CD4-positive, alpha-beta T cell (primary cell): ENCODE measurements at regions of chr9 and their contacts with region 1.

Region 1: GRCh38 chr9:124852829-124853531 is at the start of gene WDR38:
- DNase-seq: peak; percentile 56 to 94 (median 67)
- ATAC-seq: peak; percentile 85
- H3K4me3 ChIP-seq: peak within 1 kb of the TSS; percentile 40
- H3K4me3 Mint-ChIP-seq: peak within 1 kb of the TSS; percentile 56
- H3K27ac ChIP-seq: peak within 1 kb of the TSS in 1 of 2 donors; percentile 21
- H3K27ac Mint-ChIP-seq: no peak within 1 kb of the TSS
- H3K4me1 ChIP-seq: peaks cover 19% of the 10 kb centered on the region
- H3K4me1 Mint-ChIP-seq: peaks cover 15% of the 10 kb centered on the region
- H3K27me3 ChIP-seq: peaks cover 0 to 5% of the 10 kb centered on the region in 2 experiments
- H3K27me3 Mint-ChIP-seq: peaks cover 11% of the 10 kb centered on the region
- CTCF ChIP-seq: peak; percentile 99
- total RNA-seq, gene WDR38: not detected

Region 2: GRCh38 chr9:124617471-124618141 is 235.4 kb before region 1 on chr9:
- CTCF ChIA-PET with region 1: interaction called, 4 read pairs
- POLR2A ChIA-PET with region 1: no interaction called
- intact Hi-C with region 1: loop called in 1 of 2 experiments (anchors 5 kb)
- DNase-seq: peak; percentile 56 to 82 (median 63)
- ATAC-seq: peak; percentile 71
- H3K4me3 ChIP-seq: no peak overlapping the region
- H3K4me3 Mint-ChIP-seq: no peak overlapping the region
- H3K27ac ChIP-seq: no peak overlapping the region
- H3K27ac Mint-ChIP-seq: no peak overlapping the region
- H3K4me1 ChIP-seq: no peaks in the 10 kb centered on the region
- H3K4me1 Mint-ChIP-seq: no peaks in the 10 kb centered on the region
- H3K27me3 ChIP-seq: peaks cover 0 to 6% of the 10 kb centered on the region in 2 experiments
- H3K27me3 Mint-ChIP-seq: peaks cover 12% of the 10 kb centered on the region
- CTCF ChIP-seq: peak; percentile 74

Region 3: DNA sequence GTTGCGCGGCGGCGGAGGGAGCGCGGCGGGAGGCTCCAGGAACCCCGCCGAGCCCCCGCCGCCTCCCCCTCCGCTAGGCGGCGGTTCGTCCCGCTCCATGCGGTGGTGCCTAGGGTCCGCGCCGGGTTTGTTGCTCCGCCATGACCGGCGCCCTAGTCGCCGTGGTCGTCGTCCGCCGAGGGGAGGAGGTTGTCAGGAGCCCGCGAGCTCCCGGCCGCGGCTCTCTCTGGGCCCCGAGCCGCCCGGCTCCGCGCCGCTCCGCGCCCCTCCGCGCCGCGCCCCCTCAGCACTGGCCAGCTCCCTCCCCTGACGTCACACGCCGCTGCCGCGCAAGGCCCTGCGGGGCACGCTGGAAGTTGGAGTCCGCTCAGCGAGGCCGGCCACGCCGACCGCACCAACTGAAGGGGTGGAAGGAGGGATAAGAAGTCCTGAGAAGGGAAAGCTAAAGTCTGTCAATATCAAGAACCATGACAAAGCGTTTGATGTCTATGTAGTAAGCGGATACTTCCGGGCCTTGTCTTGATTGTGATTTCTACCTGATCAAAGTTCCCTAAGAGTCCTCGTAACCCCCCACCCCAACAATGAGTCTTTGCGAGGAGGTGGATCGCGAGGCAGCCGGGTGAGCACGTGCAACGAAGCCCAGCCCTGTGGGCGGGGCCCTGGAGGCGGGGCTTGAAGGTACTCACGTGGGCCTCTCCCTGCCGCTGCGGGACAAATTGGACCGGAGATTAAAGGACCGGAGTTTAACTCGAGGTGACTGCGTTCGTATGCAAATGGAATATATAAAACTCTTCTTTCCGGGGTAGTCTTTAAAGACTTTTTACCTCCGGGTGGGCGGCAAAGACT is 81.7 kb before region 1 on chr9 and contains the start of gene NR6A1:
- CTCF ChIA-PET with region 1: interaction called, 106 read pairs
- POLR2A ChIA-PET with region 1: interaction called, 9 read pairs
- intact Hi-C with region 1: loop called (anchors 1 kb)
- DNase-seq: peak; percentile 81 to 97 (median 90)
- ATAC-seq: peak; percentile 88
- H3K4me3 ChIP-seq: peak within 1 kb of the TSS; percentile 59
- H3K4me3 Mint-ChIP-seq: peak within 1 kb of the TSS; percentile 90
- H3K27ac ChIP-seq: no peak within 1 kb of the TSS
- H3K27ac Mint-ChIP-seq: peak within 1 kb of the TSS; percentile 32
- H3K4me1 ChIP-seq: peaks cover 32% of the 10 kb centered on the region
- H3K4me1 Mint-ChIP-seq: peaks cover 39% of the 10 kb centered on the region
- H3K27me3 ChIP-seq: peaks cover 34 to 71% of the 10 kb centered on the region in 2 experiments
- H3K27me3 Mint-ChIP-seq: peaks cover 87% of the 10 kb centered on the region
- CTCF ChIP-seq: no peak
- total RNA-seq, gene NR6A1: not detected

Region 4: DNA sequence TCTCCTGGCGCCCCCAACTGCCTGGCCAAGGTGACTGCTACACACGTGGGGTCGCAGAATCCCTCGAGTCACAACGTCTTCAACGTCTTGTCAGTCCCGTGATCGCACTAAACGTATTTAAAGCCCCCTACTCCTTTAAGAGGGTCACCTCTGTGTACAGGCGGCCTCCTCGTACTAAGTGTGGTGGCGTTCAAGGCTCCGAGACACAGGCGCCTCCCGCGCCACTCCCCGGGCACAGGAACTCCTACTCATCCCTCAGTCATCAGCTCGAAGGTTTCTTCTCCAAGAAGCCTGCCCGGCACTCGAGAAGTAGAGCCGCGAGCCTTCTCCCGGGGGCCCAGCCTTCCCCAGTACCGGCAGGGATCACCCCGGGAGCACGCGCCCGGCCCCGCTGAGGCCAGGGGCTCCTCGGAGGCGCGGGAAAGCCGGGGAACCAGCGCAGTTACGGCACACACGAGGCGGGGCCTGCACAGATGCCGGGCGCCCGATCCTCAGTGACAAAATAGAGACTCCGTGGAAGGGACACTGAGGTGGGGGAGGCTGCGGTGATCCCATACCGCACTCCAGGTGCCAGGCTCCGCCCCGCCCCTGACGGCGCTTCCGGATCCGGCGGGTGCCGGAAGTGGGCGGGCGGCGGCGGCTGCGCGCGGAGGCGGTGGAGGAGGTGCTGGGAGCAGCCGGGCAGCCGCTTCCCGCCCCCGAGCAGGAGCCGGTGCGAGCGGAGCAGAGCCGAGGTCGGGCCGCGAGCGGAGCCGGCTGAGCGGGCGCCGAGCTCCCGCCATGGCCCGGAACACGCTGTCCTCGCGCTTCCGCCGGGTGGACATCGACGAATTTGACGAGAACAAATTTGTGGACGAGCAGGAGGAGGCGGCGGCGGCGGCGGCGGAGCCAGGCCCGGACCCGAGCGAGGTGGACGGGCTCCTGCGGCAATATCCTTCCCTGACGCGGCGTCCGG is 15.8 kb after region 1 on chr9:
- CTCF ChIA-PET with region 1: interaction called, 21 read pairs
- POLR2A ChIA-PET with region 1: interaction called, 4 read pairs
- intact Hi-C with region 1: no loop called
- DNase-seq: peak; percentile 76 to 95 (median 87)
- ATAC-seq: peak; percentile 75
- H3K4me3 ChIP-seq: peak overlapping the region; percentile 84
- H3K4me3 Mint-ChIP-seq: peak overlapping the region; percentile 92
- H3K27ac ChIP-seq: peak overlapping the region; percentile 93 to 96
- H3K27ac Mint-ChIP-seq: peak overlapping the region; percentile 92
- H3K4me1 ChIP-seq: peaks cover 58% of the 10 kb centered on the region
- H3K4me1 Mint-ChIP-seq: peaks cover 56% of the 10 kb centered on the region
- H3K27me3 ChIP-seq: no peaks in the 10 kb centered on the region
- H3K27me3 Mint-ChIP-seq: no peaks in the 10 kb centered on the region
- CTCF ChIP-seq: no peak

Region 5: DNA sequence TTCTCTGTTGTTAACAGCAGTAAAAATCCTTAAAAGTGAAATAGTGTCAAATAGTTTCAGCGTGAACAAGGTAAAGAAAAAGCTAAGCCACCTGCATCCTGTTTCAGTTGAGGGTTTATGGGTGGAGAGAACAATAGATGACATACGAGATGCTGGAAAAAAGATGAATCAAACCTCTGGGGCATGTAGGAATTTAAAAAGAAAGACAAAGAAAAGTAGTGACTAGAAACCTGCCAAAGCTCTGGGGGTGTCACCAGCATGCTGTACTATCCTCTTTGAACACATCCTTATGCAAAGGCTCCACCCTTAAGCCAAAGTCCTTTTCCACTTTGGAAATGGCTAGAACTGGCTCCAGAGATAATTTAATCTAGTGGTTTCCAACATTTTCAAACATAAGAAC is 268.2 kb after region 1 on chr9:
- CTCF ChIA-PET with region 1: no interaction called
- POLR2A ChIA-PET with region 1: no interaction called
- intact Hi-C with region 1: no loop called
- DNase-seq: peak in 1 of 14 experiments; percentile 13
- ATAC-seq: no peak
- H3K4me3 ChIP-seq: no peak overlapping the region
- H3K4me3 Mint-ChIP-seq: peak overlapping the region; percentile 34
- H3K27ac ChIP-seq: no peak overlapping the region
- H3K27ac Mint-ChIP-seq: peak overlapping the region; percentile 82
- H3K4me1 ChIP-seq: peaks cover 27% of the 10 kb centered on the region
- H3K4me1 Mint-ChIP-seq: peaks cover 52% of the 10 kb centered on the region
- H3K27me3 ChIP-seq: no peaks in the 10 kb centered on the region
- H3K27me3 Mint-ChIP-seq: no peaks in the 10 kb centered on the region
- CTCF ChIP-seq: no peak

Region 6: DNA sequence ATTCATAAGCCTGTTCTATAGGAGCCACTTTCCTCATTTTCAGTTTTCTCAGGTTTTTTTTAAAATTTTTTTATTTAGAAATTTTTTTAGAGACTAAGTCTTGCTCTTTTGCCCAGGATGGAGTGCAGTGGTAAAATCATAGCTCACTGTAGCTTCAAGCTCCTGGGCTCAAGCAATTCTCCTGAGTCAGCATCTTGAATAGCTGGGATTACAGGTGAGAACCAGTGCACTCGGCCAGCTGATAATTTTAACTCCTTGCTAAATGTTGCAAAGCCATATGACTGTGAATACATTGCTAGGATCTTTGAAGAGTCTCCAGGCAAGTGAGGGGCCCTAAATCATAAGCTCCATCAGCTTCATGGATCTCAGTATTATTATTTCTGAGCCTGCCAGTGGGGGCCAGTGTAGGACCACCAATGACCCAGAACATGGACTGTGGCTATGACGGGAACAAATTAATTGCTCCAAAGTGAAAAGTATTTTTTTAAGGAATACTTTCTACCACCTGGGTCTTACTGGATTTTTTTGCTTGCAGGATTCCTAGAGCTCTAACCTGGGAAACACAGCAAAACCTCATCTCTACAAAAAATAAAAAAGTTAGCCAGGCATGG is 402.9 kb after region 1 on chr9:
- CTCF ChIA-PET with region 1: no interaction called
- POLR2A ChIA-PET with region 1: no interaction called
- intact Hi-C with region 1: loop called in 1 of 2 experiments (anchors 5 kb)
- DNase-seq: peak in 1 of 14 experiments; percentile 13
- ATAC-seq: no peak
- H3K4me3 ChIP-seq: no peak overlapping the region
- H3K4me3 Mint-ChIP-seq: no peak overlapping the region
- H3K27ac ChIP-seq: no peak overlapping the region
- H3K27ac Mint-ChIP-seq: no peak overlapping the region
- H3K4me1 ChIP-seq: peaks cover under 1% of the 10 kb centered on the region
- H3K4me1 Mint-ChIP-seq: peaks cover 6% of the 10 kb centered on the region
- H3K27me3 ChIP-seq: no peaks in the 10 kb centered on the region
- H3K27me3 Mint-ChIP-seq: no peaks in the 10 kb centered on the region
- CTCF ChIP-seq: no peak